ENCODE measurements at regions of chr22 and their contacts with region 1.

Region 1: GRCh38 chr22:22508274-22509176 is at the start of gene ZNF280B:
- DNase-seq: peak; percentile 89
- ATAC-seq: peak; percentile 98
- H3K4me3 Mint-ChIP-seq: peak within 1 kb of the TSS; percentile 77
- H3K27ac Mint-ChIP-seq: no peak within 1 kb of the TSS
- H3K4me1 Mint-ChIP-seq: peaks cover 8% of the 10 kb centered on the region
- H3K27me3 Mint-ChIP-seq: peaks cover 69% of the 10 kb centered on the region
- CTCF ChIP-seq: peak; percentile 38; the same call in 1 of the 2 replicates
- total RNA-seq, gene ZNF280B: 5.9 to 7.7 TPM (median 7.0 TPM) in 3 replicates

Region 2: GRCh38 chr22:22215659-22216449 is 292.7 kb before region 1 on chr22:
- CTCF ChIA-PET with region 1: no interaction called
- POLR2A ChIA-PET with region 1: no interaction called
- DNase-seq: no peak
- ATAC-seq: no peak
- H3K4me3 Mint-ChIP-seq: no peak overlapping the region
- H3K27ac Mint-ChIP-seq: no peak overlapping the region
- H3K4me1 Mint-ChIP-seq: no peaks in the 10 kb centered on the region
- H3K27me3 Mint-ChIP-seq: peaks cover 94% of the 10 kb centered on the region
- CTCF ChIP-seq: no peak

Region 3: GRCh38 chr22:22520020-22520656 is 11.6 kb after region 1 on chr22 and contains the start of gene ZNF280A:
- CTCF ChIA-PET with region 1: interaction called, 10 read pairs
- POLR2A ChIA-PET with region 1: interaction called, 5 read pairs
- DNase-seq: no peak
- ATAC-seq: peak; percentile 64
- H3K4me3 Mint-ChIP-seq: no peak within 1 kb of the TSS; the same call in 1 of the 2 replicates
- H3K27ac Mint-ChIP-seq: no peak within 1 kb of the TSS
- H3K4me1 Mint-ChIP-seq: peaks cover 14% of the 10 kb centered on the region
- H3K27me3 Mint-ChIP-seq: peaks cover 91% of the 10 kb centered on the region
- CTCF ChIP-seq: no peak
- total RNA-seq, gene ZNF280A: 0.22 to 0.44 TPM (median 0.30 TPM) in 3 replicates

Measured in WTC11 (cell line).